HAP-1 (cell line): ENCODE measurements at regions of chr9 and their contacts with region 1.

Region 1: DNA sequence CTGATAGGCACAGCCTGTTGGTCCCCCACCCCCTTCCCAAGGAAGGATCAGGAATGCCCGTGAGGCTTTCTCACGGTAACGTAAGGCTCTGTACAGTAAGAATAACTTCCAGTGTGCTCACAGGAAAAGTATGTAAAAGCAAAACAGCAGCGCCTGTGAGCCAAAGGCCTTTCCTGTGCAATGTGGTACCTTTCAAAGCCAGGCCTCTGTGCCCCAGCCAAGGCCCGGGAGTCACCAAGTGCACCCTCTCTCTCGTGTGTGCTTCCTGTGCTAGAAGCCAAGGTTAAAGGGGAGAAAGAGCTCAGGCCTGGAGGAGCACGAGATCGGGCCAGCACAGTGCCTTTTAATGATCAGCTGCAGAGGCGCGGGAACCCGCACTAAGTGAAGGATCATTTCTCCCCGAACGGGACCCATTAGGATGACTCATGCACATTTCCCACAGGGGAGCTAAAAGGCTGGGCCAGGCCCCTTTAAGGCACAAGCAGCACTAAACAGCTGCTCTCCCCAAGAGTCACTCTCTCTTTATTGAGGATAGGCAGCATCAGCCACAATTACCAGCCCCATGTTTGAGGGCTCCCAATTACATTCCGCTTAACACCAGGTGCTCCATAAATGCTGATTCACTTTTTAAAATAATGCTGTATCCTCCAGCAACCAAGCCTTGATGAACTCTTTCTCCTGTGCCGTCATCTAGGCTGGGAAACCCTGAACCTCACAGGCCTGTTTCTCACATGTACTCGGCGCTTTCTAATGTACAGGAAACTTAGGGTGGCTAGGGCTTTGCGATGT is 42.8 kb downstream of the SHB start:
- DNase-seq: no peak
- H3K4me3 ChIP-seq: no peak overlapping the region
- H3K4me1 ChIP-seq: peaks cover 19% of the 10 kb centered on the region
- H3K27me3 ChIP-seq: no peaks in the 10 kb centered on the region

Region 2: DNA sequence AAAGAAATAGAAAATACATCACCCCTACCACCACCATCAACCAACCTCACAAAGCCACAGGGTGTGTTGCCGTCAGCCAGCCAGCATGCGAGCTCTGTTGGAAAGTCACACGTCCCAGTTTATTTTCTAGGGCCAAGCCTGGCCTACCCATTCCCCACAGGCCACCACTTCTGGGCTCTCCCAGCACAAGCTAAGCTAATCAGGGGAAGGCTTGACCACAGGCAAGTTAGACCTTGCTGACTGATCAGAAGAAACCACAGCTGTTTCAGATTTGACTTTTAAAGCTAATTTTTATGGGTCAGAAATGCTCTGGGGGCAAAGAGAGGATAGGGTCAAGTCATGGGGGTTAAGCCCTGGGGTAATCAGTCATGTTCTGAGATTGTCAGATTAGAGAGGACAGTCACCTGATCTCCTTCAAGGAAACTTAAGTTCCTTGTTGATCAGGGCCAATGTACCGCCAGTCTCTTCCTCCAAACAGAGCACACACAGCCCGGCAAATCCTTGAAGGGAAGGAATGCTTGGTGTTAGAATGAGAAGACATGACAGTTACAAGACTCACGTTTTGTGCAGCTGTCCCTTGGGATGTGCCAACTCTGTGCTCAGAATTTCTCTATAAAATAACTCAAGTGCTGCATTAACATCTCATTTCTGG is 35.2 kb after region 1 on chr9:
- in situ Hi-C with region 1: loop called (anchors 5 kb)
- DNase-seq: no peak
- H3K4me3 ChIP-seq: no peak overlapping the region
- H3K4me1 ChIP-seq: peaks cover 22% of the 10 kb centered on the region
- H3K27me3 ChIP-seq: no peaks in the 10 kb centered on the region